HEK293 (cell line): ENCODE measurements at regions of chr11 and their contacts with region 1.

Region 1: DNA sequence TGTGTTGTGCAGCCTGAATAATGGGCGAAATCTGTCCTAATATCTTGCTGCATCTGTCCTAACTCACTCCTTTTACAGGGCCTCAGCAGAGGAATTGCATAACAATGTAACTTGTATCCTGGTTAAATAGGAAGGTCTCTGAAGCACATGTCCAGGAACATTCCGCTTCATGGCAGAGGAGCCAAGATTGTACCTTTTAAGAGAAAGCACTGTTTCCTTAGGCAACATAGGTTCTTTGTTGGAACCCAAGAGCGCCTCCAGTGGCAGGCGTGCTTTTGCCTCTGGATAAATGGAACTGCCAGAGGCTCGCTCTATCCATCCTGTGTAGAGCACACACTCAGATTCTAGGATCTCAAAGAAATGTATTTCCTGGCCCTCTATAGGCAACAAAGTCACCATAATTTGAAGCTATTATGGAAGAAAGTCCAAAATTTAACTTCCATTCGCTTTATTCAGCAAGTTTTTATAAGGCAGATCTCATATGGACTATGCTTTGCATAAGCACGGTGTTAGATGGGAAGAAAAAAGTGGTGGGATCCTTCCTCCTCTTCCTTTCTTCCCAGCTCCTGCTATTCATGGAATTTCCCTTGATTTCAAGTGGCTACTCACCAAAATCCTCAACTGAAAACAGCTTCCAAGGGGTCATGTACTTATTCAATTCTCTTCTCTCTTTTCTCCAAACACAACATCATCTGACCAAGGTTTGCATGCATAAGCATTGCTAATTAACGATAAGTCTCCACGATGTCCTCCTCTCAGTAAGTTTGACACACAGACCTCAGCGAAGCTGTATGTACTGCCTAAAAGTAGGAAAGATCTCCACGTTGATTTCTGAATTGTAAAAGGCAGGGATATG is at the start of gene BLID:
- H3K4me3 ChIP-seq: no peak within 1 kb of the TSS
- H3K27ac ChIP-seq: no peak within 1 kb of the TSS
- H3K4me1 ChIP-seq: no peaks in the 10 kb centered on the region
- CTCF ChIP-seq: no peak

Region 2: GRCh38 chr11:121740902-121741301 is 374.9 kb before region 1 on chr11:
- CTCF ChIA-PET with region 1: no interaction called
- POLR2A ChIA-PET with region 1: no interaction called
- H3K4me3 ChIP-seq: no peak overlapping the region
- H3K27ac ChIP-seq: no peak overlapping the region
- H3K4me1 ChIP-seq: no peaks in the 10 kb centered on the region
- CTCF ChIP-seq: no peak

Region 3: GRCh38 chr11:122126024-122126688 is 10.4 kb after region 1 on chr11:
- CTCF ChIA-PET with region 1: interaction called, 10 read pairs
- POLR2A ChIA-PET with region 1: no interaction called
- H3K4me3 ChIP-seq: no peak overlapping the region
- H3K27ac ChIP-seq: no peak overlapping the region
- H3K4me1 ChIP-seq: no peaks in the 10 kb centered on the region
- CTCF ChIP-seq: no peak

Region 4: GRCh38 chr11:122202951-122203456 is 87.3 kb after region 1 on chr11:
- CTCF ChIA-PET with region 1: interaction called, 25 read pairs
- POLR2A ChIA-PET with region 1: no interaction called
- H3K4me3 ChIP-seq: no peak overlapping the region
- H3K27ac ChIP-seq: no peak overlapping the region
- H3K4me1 ChIP-seq: peaks cover 9% of the 10 kb centered on the region
- CTCF ChIP-seq: 0 out of 2 replicates have a peak, but pooled peaks have one; percentile 30